Caco-2 (cell line): ENCODE measurements at regions of chr6 and their contacts with region 1.

Region 1: GRCh38 chr6:158040051-158040803 is 58.6 kb downstream of the SYNJ2 start:
- DNase-seq: peak; percentile 82 to 86
- H3K4me3 ChIP-seq: no peak overlapping the region; the same call in 1 of the 2 replicates
- H3K4me3 Mint-ChIP-seq: peak overlapping the region; percentile 67
- H3K27ac Mint-ChIP-seq: peak overlapping the region; percentile 92
- H3K4me1 ChIP-seq: peaks cover 65% of the 10 kb centered on the region
- H3K4me1 Mint-ChIP-seq: peaks cover 54% of the 10 kb centered on the region
- H3K27me3 ChIP-seq: no peaks in the 10 kb centered on the region
- H3K27me3 Mint-ChIP-seq: no peaks in the 10 kb centered on the region
- CTCF ChIP-seq: no peak

Region 2: GRCh38 chr6:157981395-157982296 is 58.6 kb before region 1 on chr6 and contains the start of gene SYNJ2:
- CTCF ChIA-PET with region 1: interaction called, 4 read pairs
- POLR2A ChIA-PET with region 1: no interaction called
- intact Hi-C with region 1: loop called (anchors 1 kb)
- DNase-seq: peak; percentile 86 to 91
- H3K4me3 ChIP-seq: peak within 1 kb of the TSS; percentile 92
- H3K4me3 Mint-ChIP-seq: peak within 1 kb of the TSS; percentile 74
- H3K27ac Mint-ChIP-seq: peak within 1 kb of the TSS; percentile 34
- H3K4me1 ChIP-seq: peaks cover 55% of the 10 kb centered on the region
- H3K4me1 Mint-ChIP-seq: peaks cover 8% of the 10 kb centered on the region
- H3K27me3 ChIP-seq: no peaks in the 10 kb centered on the region
- H3K27me3 Mint-ChIP-seq: no peaks in the 10 kb centered on the region
- CTCF ChIP-seq: no peak
- total RNA-seq, gene SYNJ2: 45.0 and 47.9 TPM in 2 replicates

Region 3: GRCh38 chr6:158002951-158003853 is 37.0 kb before region 1 on chr6:
- CTCF ChIA-PET with region 1: interaction called, 5 read pairs
- POLR2A ChIA-PET with region 1: no interaction called
- intact Hi-C with region 1: loop called (anchors 2 kb)
- DNase-seq: peak in 1 of 2 experiments; percentile 24
- H3K4me3 ChIP-seq: no peak overlapping the region
- H3K4me3 Mint-ChIP-seq: peak overlapping the region; percentile 4
- H3K27ac Mint-ChIP-seq: peak overlapping the region; percentile 86
- H3K4me1 ChIP-seq: peaks cover 51% of the 10 kb centered on the region
- H3K4me1 Mint-ChIP-seq: peaks cover 58% of the 10 kb centered on the region
- H3K27me3 ChIP-seq: no peaks in the 10 kb centered on the region
- H3K27me3 Mint-ChIP-seq: no peaks in the 10 kb centered on the region
- CTCF ChIP-seq: no peak

Region 4: GRCh38 chr6:158079516-158079915 is 39.3 kb after region 1 on chr6:
- CTCF ChIA-PET with region 1: no interaction called
- POLR2A ChIA-PET with region 1: no interaction called
- intact Hi-C with region 1: no loop called
- DNase-seq: no peak
- H3K4me3 ChIP-seq: no peak overlapping the region
- H3K4me3 Mint-ChIP-seq: no peak overlapping the region
- H3K27ac Mint-ChIP-seq: no peak overlapping the region
- H3K4me1 ChIP-seq: no peaks in the 10 kb centered on the region
- H3K4me1 Mint-ChIP-seq: no peaks in the 10 kb centered on the region
- H3K27me3 ChIP-seq: no peaks in the 10 kb centered on the region
- H3K27me3 Mint-ChIP-seq: no peaks in the 10 kb centered on the region
- CTCF ChIP-seq: no peak

Region 5: DNA sequence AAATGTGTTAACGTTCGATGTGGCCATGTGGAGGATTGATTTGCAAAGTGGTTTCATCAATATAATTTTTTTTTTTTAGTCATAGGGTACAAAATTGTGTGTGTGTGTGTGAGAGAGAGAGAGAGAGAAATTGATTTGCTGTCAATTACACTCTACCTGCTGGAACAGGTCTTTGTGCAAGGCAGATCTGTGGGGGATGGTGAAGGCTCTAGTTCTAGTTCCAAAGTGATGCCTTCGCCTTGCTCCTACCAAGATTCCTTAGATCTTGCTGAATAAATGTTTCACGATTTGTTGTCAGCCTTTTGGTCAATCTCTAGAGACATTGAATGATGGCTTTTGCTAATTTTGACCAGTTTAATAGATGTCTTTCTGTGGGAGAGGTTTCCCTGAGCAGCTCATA is 63.0 kb after region 1 on chr6:
- CTCF ChIA-PET with region 1: no interaction called
- POLR2A ChIA-PET with region 1: no interaction called
- intact Hi-C with region 1: no loop called
- DNase-seq: no peak
- H3K4me3 ChIP-seq: no peak overlapping the region
- H3K4me3 Mint-ChIP-seq: no peak overlapping the region
- H3K27ac Mint-ChIP-seq: no peak overlapping the region
- H3K4me1 ChIP-seq: no peaks in the 10 kb centered on the region
- H3K4me1 Mint-ChIP-seq: no peaks in the 10 kb centered on the region
- H3K27me3 ChIP-seq: no peaks in the 10 kb centered on the region
- H3K27me3 Mint-ChIP-seq: no peaks in the 10 kb centered on the region
- CTCF ChIP-seq: no peak